GM13977 (cell line): ENCODE measurements at regions of chr11 and their contacts with region 1.

Region 1: DNA sequence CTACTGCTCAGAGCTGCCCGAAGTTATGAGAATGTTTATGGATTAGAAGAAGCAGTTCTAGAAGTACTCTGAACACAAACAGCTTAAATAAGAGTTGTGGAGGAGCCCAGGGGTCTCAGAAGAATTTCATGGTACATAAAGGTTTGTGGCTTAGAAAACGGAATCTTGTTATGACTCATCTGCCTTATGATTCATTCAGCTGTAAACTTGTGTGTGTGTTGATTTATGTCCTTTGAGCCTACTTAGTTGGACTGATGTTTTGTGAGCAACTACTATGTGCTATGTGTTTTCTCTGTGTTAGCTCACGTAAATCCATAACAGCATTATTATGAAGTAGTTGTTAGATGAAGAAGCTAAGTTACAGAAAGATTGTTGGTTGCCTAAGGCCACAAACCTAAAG is 203.7 kb downstream of the PGR start:
- DNase-seq: peak; percentile 4
- CTCF ChIP-seq: no peak

Region 2: GRCh38 chr11:100581318-100581717 is 344.6 kb before region 1 on chr11:
- in situ Hi-C with region 1: loop called (anchors 10 kb)
- DNase-seq: no peak
- CTCF ChIP-seq: no peak

Region 3: DNA sequence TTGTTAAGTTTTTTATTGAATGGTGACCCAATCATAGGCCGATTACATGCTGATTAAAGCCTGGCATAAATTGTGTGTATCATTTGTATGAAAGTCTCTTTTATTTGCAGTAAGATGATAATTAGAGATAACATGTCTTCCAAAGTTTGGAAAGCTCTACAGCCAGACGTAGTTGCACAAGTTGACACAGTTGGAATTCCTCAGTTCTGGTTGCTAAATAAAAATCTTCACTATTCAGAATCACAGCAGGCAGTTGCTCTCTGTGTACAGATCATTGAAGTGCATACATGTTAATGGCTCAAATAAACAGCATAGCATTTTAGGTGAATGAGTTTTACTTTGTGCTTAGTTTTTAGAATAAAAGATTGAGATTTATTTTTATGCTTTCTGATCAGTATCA is 169.4 kb before region 1 on chr11:
- in situ Hi-C with region 1: no loop called
- DNase-seq: no peak
- CTCF ChIP-seq: no peak

Region 4: GRCh38 chr11:100863080-100863581 is 62.8 kb before region 1 on chr11:
- in situ Hi-C with region 1: loop called (anchors 10 kb)
- DNase-seq: no peak
- CTCF ChIP-seq: no peak

Region 5: GRCh38 chr11:101187748-101188147 is 261.8 kb after region 1 on chr11:
- in situ Hi-C with region 1: no loop called
- DNase-seq: no peak
- CTCF ChIP-seq: no peak